PC-9 (cell line): ENCODE measurements at regions of chr21 and their contacts with region 1.

Region 1: DNA sequence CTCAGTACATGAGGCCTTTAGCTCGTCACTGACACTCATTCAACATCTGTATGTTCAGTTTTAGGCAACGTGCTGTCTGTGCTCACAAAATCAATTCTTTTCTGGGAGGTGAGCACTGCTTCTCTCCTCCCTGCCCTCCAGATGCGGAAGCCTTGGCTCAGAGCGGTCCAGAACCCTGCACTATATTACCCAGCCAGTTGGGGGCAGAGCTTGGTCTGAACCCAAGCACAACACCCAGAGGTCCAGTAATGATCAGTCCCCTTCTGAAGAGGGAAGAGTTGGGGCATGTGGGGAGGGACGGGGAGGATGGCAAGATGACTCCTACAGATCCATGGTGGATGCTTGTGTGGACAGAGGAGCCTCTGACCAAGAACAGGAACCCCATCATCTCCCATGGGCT is 5.6 kb upstream of the DSCAM start:
- DNase-seq: no peak
- H3K4me3 ChIP-seq: no peak overlapping the region
- H3K27ac ChIP-seq: no peak overlapping the region
- H3K4me1 ChIP-seq: no peaks in the 10 kb centered on the region
- H3K27me3 ChIP-seq: peaks cover 23% of the 10 kb centered on the region; the same call in 1 of the 2 replicates
- CTCF ChIP-seq: no peak

Region 2: GRCh38 chr21:39915881-39916280 is 936.7 kb before region 1 on chr21:
- CTCF ChIA-PET with region 1: no interaction called
- POLR2A ChIA-PET with region 1: no interaction called
- intact Hi-C with region 1: no loop called
- DNase-seq: no peak
- H3K4me3 ChIP-seq: no peak overlapping the region
- H3K27ac ChIP-seq: no peak overlapping the region
- H3K4me1 ChIP-seq: no peaks in the 10 kb centered on the region
- H3K27me3 ChIP-seq: peaks cover under 1% of the 10 kb centered on the region; the same call in 1 of the 2 replicates
- CTCF ChIP-seq: no peak

Region 3: GRCh38 chr21:40871099-40871498 is 18.5 kb after region 1 on chr21:
- CTCF ChIA-PET with region 1: no interaction called
- POLR2A ChIA-PET with region 1: no interaction called
- intact Hi-C with region 1: no loop called
- DNase-seq: no peak
- H3K4me3 ChIP-seq: no peak overlapping the region
- H3K27ac ChIP-seq: no peak overlapping the region
- H3K4me1 ChIP-seq: no peaks in the 10 kb centered on the region
- H3K27me3 ChIP-seq: no peaks in the 10 kb centered on the region
- CTCF ChIP-seq: no peak

Region 4: GRCh38 chr21:41102281-41102680 is 249.7 kb after region 1 on chr21:
- CTCF ChIA-PET with region 1: interaction called, 13 read pairs
- POLR2A ChIA-PET with region 1: no interaction called
- intact Hi-C with region 1: no loop called
- DNase-seq: no peak
- H3K4me3 ChIP-seq: no peak overlapping the region
- H3K27ac ChIP-seq: no peak overlapping the region
- H3K4me1 ChIP-seq: no peaks in the 10 kb centered on the region
- H3K27me3 ChIP-seq: peaks cover 72% of the 10 kb centered on the region
- CTCF ChIP-seq: no peak